AG04449 (cell line): ENCODE measurements at regions of chr6 and their contacts with region 1.

Region 1: GRCh38 chr6:44151348-44152108 is 7.1 kb upstream of the CAPN11 start:
- DNase-seq: no peak
- H3K4me3 ChIP-seq: no peak overlapping the region
- CTCF ChIP-seq: peak; percentile 99

Region 2: GRCh38 chr6:44133003-44133931 is 18.3 kb before region 1 on chr6:
- CTCF ChIA-PET with region 1: interaction called, 17 read pairs
- POLR2A ChIA-PET with region 1: no interaction called
- DNase-seq: no peak
- H3K4me3 ChIP-seq: no peak overlapping the region
- CTCF ChIP-seq: peak; percentile 7

Region 3: DNA sequence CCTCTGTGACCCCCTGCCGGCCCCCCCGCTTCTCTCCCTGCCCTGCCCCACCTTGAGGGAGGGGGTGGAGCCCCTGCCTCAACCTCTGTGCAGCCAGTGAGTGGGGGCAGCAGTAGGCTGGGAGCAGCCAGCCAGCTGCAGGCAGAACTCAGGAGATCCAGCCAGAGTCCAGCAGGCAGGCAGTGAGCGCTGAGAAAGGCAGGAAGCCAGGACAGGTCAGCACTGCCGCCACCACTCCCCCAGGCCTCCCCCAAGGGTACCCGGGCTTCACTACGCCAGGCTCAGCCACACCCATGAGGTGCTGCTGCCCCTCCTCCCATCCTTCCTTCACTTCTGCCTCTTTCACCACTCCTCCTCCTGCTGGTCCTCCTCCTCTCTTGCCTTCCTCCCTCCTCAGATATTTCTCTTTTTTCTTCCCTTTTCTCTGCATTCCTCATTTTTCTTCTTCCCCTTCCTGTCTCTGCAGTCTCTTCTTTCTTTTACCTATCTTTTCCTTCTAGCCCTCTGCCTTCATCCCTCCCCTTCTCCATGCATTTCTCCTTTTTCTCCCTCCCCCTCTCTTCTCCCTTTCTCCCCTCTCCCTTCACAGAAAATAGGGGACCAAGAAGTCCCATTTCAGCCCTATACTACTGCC is 12.7 kb before region 1 on chr6:
- CTCF ChIA-PET with region 1: interaction called, 18 read pairs
- POLR2A ChIA-PET with region 1: no interaction called
- DNase-seq: no peak
- H3K4me3 ChIP-seq: no peak overlapping the region
- CTCF ChIP-seq: no peak

Region 4: GRCh38 chr6:44161997-44162338 is 10.4 kb after region 1 on chr6:
- CTCF ChIA-PET with region 1: interaction called, 14 read pairs
- POLR2A ChIA-PET with region 1: no interaction called
- DNase-seq: no peak
- H3K4me3 ChIP-seq: no peak overlapping the region
- CTCF ChIP-seq: no peak